Panc1 (cell line): ENCODE measurements at regions of chr7 and their contacts with region 1.

Region 1: DNA sequence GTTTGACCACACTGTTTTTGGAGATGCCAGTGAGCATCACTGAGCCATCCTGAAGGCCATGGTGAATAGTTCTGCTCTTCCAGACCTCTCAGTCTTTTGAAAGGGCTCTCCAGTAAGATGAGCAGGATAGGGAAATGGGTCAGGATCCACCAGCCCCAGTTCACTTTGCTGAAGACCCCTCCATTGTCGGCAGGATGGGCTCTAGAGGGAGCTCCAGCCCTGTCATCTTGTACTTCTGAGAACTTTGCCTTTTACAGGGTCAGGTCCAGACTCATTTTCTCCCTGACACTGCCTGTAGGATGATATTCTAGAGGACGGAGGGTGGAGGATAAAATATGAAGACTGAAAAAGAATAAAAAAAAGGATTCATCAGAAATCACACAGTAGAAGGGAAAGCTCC is 13.1 kb downstream of the LHFPL3 start:
- DNase-seq: no peak
- ATAC-seq: no peak
- H3K4me3 ChIP-seq: no peak overlapping the region
- H3K27ac ChIP-seq: no peak overlapping the region
- H3K4me1 ChIP-seq: no peaks in the 10 kb centered on the region
- H3K27me3 ChIP-seq: no peaks in the 10 kb centered on the region
- CTCF ChIP-seq: peak; percentile 43

Region 2: DNA sequence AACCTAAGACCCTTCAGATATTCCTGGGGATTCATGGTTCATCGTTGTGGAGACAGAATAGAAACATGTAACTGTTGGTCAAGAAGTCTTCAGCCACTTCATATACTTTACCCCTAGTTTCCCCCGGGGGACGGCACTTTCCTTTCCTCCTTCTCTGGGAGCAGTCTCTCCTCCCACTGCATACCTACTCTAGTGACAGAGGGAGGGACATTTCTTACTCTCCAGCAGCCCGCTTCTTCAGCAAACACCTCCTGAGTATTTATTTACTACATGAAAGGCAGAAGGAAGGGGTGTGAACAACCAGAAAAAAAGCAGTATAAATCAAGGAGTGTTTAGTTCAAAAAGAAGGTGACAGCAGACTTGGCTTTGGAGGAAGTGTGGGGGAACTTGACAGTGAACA is 55.9 kb after region 1 on chr7:
- CTCF ChIA-PET with region 1: no interaction called
- POLR2A ChIA-PET with region 1: no interaction called
- in situ Hi-C with region 1: no loop called
- intact Hi-C with region 1: no loop called
- DNase-seq: no peak
- ATAC-seq: no peak
- H3K4me3 ChIP-seq: no peak overlapping the region
- H3K27ac ChIP-seq: no peak overlapping the region
- H3K4me1 ChIP-seq: no peaks in the 10 kb centered on the region
- H3K27me3 ChIP-seq: no peaks in the 10 kb centered on the region
- CTCF ChIP-seq: no peak

Region 3: GRCh38 chr7:104499227-104499626 is 157.7 kb after region 1 on chr7:
- CTCF ChIA-PET with region 1: no interaction called
- POLR2A ChIA-PET with region 1: interaction called, 14 read pairs
- in situ Hi-C with region 1: no loop called
- intact Hi-C with region 1: no loop called
- DNase-seq: no peak
- ATAC-seq: no peak
- H3K4me3 ChIP-seq: no peak overlapping the region
- H3K27ac ChIP-seq: no peak overlapping the region
- H3K4me1 ChIP-seq: no peaks in the 10 kb centered on the region
- H3K27me3 ChIP-seq: no peaks in the 10 kb centered on the region
- CTCF ChIP-seq: no peak

Region 4: GRCh38 chr7:104838537-104839299 is 497.2 kb after region 1 on chr7:
- CTCF ChIA-PET with region 1: no interaction called
- POLR2A ChIA-PET with region 1: no interaction called
- in situ Hi-C with region 1: no loop called
- intact Hi-C with region 1: no loop called
- DNase-seq: no peak
- ATAC-seq: no peak
- H3K4me3 ChIP-seq: no peak overlapping the region
- H3K27ac ChIP-seq: no peak overlapping the region
- H3K4me1 ChIP-seq: no peaks in the 10 kb centered on the region
- H3K27me3 ChIP-seq: no peaks in the 10 kb centered on the region; the same call in 1 of the 2 replicates
- CTCF ChIP-seq: no peak